ENCODE measurements at regions of chr12 and their contacts with region 1.

Region 1: DNA sequence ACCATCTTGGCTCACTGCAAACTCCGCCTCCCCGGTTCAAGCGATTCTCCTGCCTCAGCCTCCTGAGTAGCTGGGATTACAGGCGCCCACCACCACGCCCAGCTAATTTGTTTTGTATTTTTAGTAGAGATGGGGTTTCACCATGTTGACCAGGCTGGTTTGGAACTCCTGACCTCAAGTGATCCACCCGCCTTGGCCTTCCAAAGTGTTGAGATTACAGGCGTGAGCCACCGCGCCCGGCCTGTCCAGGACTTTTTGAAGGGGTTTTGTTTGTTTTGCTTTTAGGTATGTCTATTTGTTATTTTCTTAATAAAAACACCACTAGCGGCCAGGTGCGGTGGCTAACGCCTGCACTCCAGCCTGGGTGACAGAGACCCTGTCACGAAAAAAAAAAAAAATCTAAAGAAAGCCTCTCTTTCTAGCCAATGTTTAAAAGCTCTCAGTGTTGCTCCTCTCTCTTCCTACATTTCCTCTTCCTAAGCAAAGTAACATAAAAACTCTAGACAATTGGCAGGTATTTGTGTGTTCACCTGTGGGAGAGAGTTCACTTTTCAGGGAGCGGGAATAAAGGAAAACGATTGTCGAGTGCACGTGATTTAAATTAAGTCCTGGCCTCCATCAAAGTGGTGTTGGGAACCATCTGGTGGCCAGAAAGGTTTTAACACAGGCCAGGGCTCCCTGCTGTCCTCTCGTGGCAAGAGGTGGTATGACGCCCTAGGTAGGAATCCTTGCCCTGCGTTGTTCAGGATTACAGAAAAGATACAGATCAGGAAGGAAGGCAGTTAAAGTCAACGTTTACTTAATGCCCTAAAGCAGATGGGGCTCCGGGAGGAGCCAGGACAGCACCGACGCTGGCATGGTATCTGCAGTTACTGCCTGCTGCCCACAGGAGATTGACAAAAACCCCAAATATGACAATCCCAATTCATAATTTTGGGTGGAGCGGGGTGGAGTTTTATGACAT is 36.2 kb upstream of the ATP23 start:
- DNase-seq: peak; percentile 76
- ATAC-seq: peak; percentile 100
- H3K4me3 Mint-ChIP-seq: peak overlapping the region; percentile 66
- H3K27ac Mint-ChIP-seq: no peak overlapping the region
- H3K4me1 Mint-ChIP-seq: peaks cover 13% of the 10 kb centered on the region
- H3K27me3 Mint-ChIP-seq: peaks cover 5% of the 10 kb centered on the region
- CTCF ChIP-seq: peak; percentile 88

Region 2: GRCh38 chr12:57583008-57583831 is 321.9 kb before region 1 on chr12:
- CTCF ChIA-PET with region 1: interaction called, 6 read pairs
- POLR2A ChIA-PET with region 1: no interaction called
- intact Hi-C with region 1: loop called (anchors 1 kb)
- DNase-seq: peak; percentile 24
- ATAC-seq: peak; percentile 100
- H3K4me3 Mint-ChIP-seq: no peak overlapping the region
- H3K27ac Mint-ChIP-seq: no peak overlapping the region
- H3K4me1 Mint-ChIP-seq: peaks cover 4% of the 10 kb centered on the region
- H3K27me3 Mint-ChIP-seq: peaks cover 12% of the 10 kb centered on the region
- CTCF ChIP-seq: peak; percentile 85

Region 3: DNA sequence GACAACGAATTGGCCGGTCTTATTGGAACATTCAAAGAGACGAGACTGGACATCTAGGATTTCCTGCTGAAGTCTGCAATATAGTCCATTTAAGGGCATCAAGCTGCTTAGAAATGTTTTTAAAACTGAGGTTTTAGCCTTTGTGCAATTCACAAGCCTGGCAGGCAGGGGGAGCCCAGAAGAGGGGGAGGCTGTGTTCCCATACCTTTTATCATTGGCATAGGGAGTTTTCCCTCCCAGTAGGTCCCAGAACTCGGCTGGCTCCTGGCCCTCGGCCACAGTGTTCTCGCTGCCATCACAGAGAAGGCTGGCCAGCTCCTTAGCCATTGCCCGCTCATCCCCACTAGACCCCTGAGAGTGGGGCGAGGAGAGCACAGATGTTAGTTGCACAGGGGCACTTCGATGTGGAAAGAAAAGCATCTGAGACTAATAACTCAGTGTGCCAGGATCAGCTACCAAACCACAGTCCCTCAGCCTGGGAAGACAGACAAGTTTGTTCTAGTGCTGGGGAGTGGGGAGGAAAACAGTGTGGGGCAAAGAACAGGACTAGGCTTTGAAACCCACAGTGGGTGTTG is 101.7 kb before region 1 on chr12:
- CTCF ChIA-PET with region 1: interaction called, 26 read pairs
- POLR2A ChIA-PET with region 1: interaction called, 7 read pairs
- intact Hi-C with region 1: loop called (anchors 1 kb)
- DNase-seq: no peak
- ATAC-seq: peak; percentile 54
- H3K4me3 Mint-ChIP-seq: no peak overlapping the region
- H3K27ac Mint-ChIP-seq: no peak overlapping the region
- H3K4me1 Mint-ChIP-seq: no peaks in the 10 kb centered on the region
- H3K27me3 Mint-ChIP-seq: no peaks in the 10 kb centered on the region
- CTCF ChIP-seq: no peak

Region 4: DNA sequence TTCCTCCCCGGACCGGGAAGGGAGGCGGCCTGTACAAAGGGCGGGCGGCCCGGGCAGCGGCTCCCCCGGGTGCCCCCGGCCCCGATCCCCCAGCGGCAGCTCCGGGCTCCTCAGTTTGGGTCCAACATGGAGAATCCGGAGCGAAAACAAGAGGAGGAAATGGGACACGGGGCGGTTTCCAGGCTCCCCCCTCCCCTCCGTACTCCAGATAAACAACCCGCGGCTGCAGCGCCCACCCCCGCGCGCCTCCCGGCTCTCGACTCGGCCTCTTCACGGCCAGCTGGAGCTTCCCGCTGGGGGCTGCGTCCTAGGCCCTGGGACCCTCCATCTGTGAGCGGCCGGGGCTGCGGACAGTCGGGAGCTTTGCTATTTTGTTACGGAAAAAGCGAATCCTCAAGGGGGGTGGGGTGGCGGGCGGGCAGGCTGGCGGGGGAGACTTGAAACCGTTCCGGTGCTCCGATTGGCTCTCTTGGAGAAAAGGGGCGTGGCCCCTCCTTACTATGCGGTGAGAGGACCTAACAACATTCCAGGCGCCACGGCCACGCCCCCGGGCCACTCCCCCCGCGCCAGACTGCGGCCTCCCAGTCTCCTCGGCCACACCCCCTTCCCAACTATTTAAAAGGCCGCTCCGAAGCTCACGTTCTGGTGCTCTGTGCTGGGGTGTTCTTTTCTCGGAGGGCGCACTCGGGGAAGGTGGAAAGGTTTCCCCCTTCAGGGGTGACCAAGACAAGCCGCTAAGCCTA is 58.4 kb before region 1 on chr12 and contains the start of gene CTDSP2:
- CTCF ChIA-PET with region 1: interaction called, 7 read pairs
- POLR2A ChIA-PET with region 1: interaction called, 122 read pairs
- intact Hi-C with region 1: no loop called
- DNase-seq: peak; percentile 81
- ATAC-seq: peak; percentile 47
- H3K4me3 Mint-ChIP-seq: peak within 1 kb of the TSS; percentile 86
- H3K27ac Mint-ChIP-seq: peak within 1 kb of the TSS; percentile 85
- H3K4me1 Mint-ChIP-seq: peaks cover 45% of the 10 kb centered on the region
- H3K27me3 Mint-ChIP-seq: peaks cover 8% of the 10 kb centered on the region
- CTCF ChIP-seq: no peak
- total RNA-seq, gene CTDSP2: 73.2 and 81.5 TPM in 2 replicates

Region 5: DNA sequence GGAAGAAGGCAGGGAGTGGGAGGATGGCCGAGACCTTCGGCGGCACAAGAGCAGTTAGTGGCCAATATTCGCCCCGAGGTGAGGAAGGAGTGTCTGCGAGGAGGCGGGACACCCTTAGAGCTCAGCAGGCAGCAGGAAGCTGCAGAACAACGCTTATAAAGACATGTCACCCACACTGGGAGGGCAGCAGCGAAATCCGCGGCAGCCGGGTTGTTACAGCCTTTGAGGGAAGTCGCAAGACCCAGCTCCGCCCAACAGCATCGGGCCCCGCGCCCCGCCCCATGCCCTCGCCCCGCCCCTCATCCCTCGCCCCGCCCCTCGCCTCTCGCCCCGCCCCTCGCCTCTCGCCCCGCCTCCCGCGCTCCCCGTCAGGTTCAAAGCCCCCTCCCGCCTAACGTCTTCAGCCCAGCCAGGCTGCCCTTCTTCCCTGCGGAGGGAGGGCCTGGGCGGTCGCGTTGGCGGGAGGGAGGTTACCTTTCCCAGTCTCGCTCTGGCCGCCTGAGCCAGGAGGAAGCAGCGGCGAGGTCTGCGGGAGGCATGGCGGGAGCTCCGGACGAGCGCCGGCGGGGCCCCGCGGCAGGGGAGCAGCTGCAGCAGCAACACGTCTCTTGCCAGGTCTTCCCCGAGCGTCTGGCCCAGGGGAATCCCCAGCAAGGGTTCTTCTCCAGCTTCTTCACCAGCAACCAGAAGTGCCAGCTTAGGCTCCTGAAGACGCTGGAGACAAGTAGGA is 36.2 kb after region 1 on chr12 and contains the start of gene ATP23:
- CTCF ChIA-PET with region 1: no interaction called
- POLR2A ChIA-PET with region 1: interaction called, 12 read pairs
- intact Hi-C with region 1: loop called (anchors 2 kb)
- DNase-seq: peak; percentile 86
- ATAC-seq: peak; percentile 89
- H3K4me3 Mint-ChIP-seq: peak within 1 kb of the TSS; percentile 96
- H3K27ac Mint-ChIP-seq: peak within 1 kb of the TSS; percentile 95
- H3K4me1 Mint-ChIP-seq: peaks cover 22% of the 10 kb centered on the region
- H3K27me3 Mint-ChIP-seq: no peaks in the 10 kb centered on the region
- CTCF ChIP-seq: no peak
- total RNA-seq, gene ATP23: 3.0 and 3.9 TPM in 2 replicates

Region 6: GRCh38 chr12:57958061-57958657 is 53.0 kb after region 1 on chr12:
- CTCF ChIA-PET with region 1: no interaction called
- POLR2A ChIA-PET with region 1: no interaction called
- intact Hi-C with region 1: no loop called
- DNase-seq: no peak
- ATAC-seq: no peak
- H3K4me3 Mint-ChIP-seq: no peak overlapping the region
- H3K27ac Mint-ChIP-seq: no peak overlapping the region
- H3K4me1 Mint-ChIP-seq: no peaks in the 10 kb centered on the region
- H3K27me3 Mint-ChIP-seq: no peaks in the 10 kb centered on the region
- CTCF ChIP-seq: no peak

Region 7: GRCh38 chr12:58196971-58197370 is 291.8 kb after region 1 on chr12:
- CTCF ChIA-PET with region 1: no interaction called
- POLR2A ChIA-PET with region 1: no interaction called
- intact Hi-C with region 1: no loop called
- DNase-seq: no peak
- ATAC-seq: no peak
- H3K4me3 Mint-ChIP-seq: no peak overlapping the region
- H3K27ac Mint-ChIP-seq: no peak overlapping the region
- H3K4me1 Mint-ChIP-seq: peaks cover 22% of the 10 kb centered on the region
- H3K27me3 Mint-ChIP-seq: peaks cover 9% of the 10 kb centered on the region
- CTCF ChIP-seq: no peak